ENCODE measurements at regions of chr22 and their contacts with region 1.

Region 1: GRCh38 chr22:50620593-50621355 is 7.2 kb downstream of the ARSA start:
- DNase-seq: peak; percentile 94
- ATAC-seq: peak; percentile 81
- H3K4me3 ChIP-seq: peak overlapping the region; percentile 46 to 79 (median 59)
- H3K4me3 Mint-ChIP-seq: peak overlapping the region; percentile 95
- H3K27ac ChIP-seq: peak overlapping the region; percentile 91 to 95
- H3K27ac Mint-ChIP-seq: peak overlapping the region; percentile 97
- H3K4me1 ChIP-seq: peaks cover 24 to 35% of the 10 kb centered on the region in 2 donors
- H3K4me1 Mint-ChIP-seq: peaks cover 31% of the 10 kb centered on the region
- H3K27me3 ChIP-seq: no peaks in the 10 kb centered on the region
- H3K27me3 Mint-ChIP-seq: no peaks in the 10 kb centered on the region
- CTCF ChIP-seq: peak; percentile 24

Region 2: DNA sequence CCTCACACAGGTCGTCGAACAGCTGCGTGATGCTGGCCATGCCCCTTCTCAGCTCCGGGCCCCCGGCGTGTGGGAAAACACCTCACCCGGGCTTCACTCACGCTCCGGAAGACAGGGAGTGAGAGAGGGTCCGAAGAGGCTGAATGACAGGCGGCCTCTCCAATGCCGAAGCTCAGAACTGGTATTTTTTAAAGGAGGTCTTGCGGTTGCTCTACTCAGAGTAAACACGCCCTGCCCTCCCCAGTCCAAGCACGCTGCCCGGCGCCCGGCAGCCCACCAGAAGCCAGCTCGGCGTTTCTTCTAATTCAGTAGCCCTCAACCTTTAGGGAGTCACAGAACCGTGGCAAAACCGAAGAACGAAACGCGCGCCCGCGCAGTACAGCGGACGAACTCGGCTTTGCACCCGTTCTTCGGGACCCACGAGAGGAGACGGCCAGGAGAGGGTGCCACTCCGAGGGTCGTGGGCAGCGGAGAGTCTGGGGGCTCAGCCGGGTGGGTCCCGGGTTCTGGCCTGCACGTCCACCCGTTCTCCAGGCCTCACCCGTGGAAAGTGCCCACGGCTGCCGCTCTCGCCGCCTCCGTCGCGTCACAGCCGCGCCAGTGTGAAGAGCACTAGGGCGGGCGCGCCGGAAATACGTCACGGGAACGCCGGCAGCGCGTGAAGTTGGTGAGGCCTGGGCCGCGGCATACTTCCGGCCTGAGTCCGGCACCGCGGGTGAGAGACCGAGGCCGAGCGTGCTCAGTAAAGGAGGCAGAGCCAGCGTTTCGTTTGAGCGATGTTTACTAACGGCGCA is 376.2 kb before region 1 on chr22 and contains the start of gene TUBGCP6:
- CTCF ChIA-PET with region 1: interaction called, 16 read pairs
- POLR2A ChIA-PET with region 1: interaction called, 9 read pairs
- intact Hi-C with region 1: loop called (anchors 2 kb)
- DNase-seq: peak; percentile 96
- ATAC-seq: peak; percentile 81
- H3K4me3 ChIP-seq: peak within 1 kb of the TSS; percentile 65 to 99 (median 90)
- H3K4me3 Mint-ChIP-seq: peak within 1 kb of the TSS; percentile 96
- H3K27ac ChIP-seq: peak within 1 kb of the TSS; percentile 91 to 96
- H3K27ac Mint-ChIP-seq: peak within 1 kb of the TSS; percentile 99
- H3K4me1 ChIP-seq: peaks cover 33 to 66% of the 10 kb centered on the region in 2 donors
- H3K4me1 Mint-ChIP-seq: peaks cover 40% of the 10 kb centered on the region
- H3K27me3 ChIP-seq: no peaks in the 10 kb centered on the region
- H3K27me3 Mint-ChIP-seq: no peaks in the 10 kb centered on the region
- CTCF ChIP-seq: no peak
- total RNA-seq, gene TUBGCP6: 137 and 139 TPM in 2 replicates

Region 3: DNA sequence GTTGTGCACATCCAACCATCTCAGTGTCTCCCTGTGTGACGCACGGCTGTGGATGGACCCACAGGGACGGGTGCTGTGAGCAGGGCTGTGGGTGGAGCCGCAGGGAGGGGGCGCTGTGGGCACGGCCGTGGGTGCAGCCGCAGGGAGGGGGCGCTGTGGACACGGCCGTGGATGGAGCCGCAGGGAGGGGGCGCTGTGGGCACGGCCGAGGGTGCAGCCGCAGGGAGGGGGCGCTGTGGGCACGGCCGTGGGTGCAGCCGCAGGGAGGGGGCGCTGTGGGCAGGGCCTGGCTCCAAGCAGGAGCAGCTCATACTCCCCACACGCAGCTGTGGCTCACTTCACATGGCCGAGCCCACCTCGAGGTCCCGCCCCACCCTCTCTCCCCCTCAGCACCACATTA is 344.6 kb before region 1 on chr22:
- CTCF ChIA-PET with region 1: interaction called, 16 read pairs
- POLR2A ChIA-PET with region 1: no interaction called
- intact Hi-C with region 1: no loop called
- DNase-seq: peak; percentile 86
- ATAC-seq: peak; percentile 71
- H3K4me3 ChIP-seq: no peak overlapping the region
- H3K4me3 Mint-ChIP-seq: no peak overlapping the region
- H3K27ac ChIP-seq: no peak overlapping the region
- H3K27ac Mint-ChIP-seq: peak overlapping the region; percentile 26
- H3K4me1 ChIP-seq: peaks cover 6 to 12% of the 10 kb centered on the region in 2 donors
- H3K4me1 Mint-ChIP-seq: peaks cover 4% of the 10 kb centered on the region
- H3K27me3 ChIP-seq: peaks cover 0 to 8% (median 1%) of the 10 kb centered on the region in 4 experiments
- H3K27me3 Mint-ChIP-seq: no peaks in the 10 kb centered on the region
- CTCF ChIP-seq: peak; percentile 64

Region 4: GRCh38 chr22:50469377-50470305 is 151.1 kb before region 1 on chr22:
- CTCF ChIA-PET with region 1: interaction called, 8 read pairs
- POLR2A ChIA-PET with region 1: no interaction called
- intact Hi-C with region 1: loop called (anchors 1 kb)
- DNase-seq: peak; percentile 96
- ATAC-seq: peak; percentile 79
- H3K4me3 ChIP-seq: peak overlapping the region in 4 of 5 experiments; percentile 1 to 39 (median 29)
- H3K4me3 Mint-ChIP-seq: peak overlapping the region; percentile 83
- H3K27ac ChIP-seq: peak overlapping the region; percentile 69 to 90
- H3K27ac Mint-ChIP-seq: peak overlapping the region; percentile 96
- H3K4me1 ChIP-seq: peaks cover 60 to 66% of the 10 kb centered on the region in 2 donors
- H3K4me1 Mint-ChIP-seq: peaks cover 69% of the 10 kb centered on the region
- H3K27me3 ChIP-seq: no peaks in the 10 kb centered on the region
- H3K27me3 Mint-ChIP-seq: no peaks in the 10 kb centered on the region
- CTCF ChIP-seq: peak; percentile 31

Region 5: GRCh38 chr22:50507991-50508884 is 112.5 kb before region 1 on chr22 and contains the start of gene NCAPH2:
- CTCF ChIA-PET with region 1: interaction called, 9 read pairs
- POLR2A ChIA-PET with region 1: interaction called, 9 read pairs
- intact Hi-C with region 1: loop called (anchors 1 kb)
- DNase-seq: peak; percentile 98
- ATAC-seq: peak; percentile 71
- H3K4me3 ChIP-seq: peak within 1 kb of the TSS; percentile 75 to 92 (median 91)
- H3K4me3 Mint-ChIP-seq: peak within 1 kb of the TSS; percentile 95
- H3K27ac ChIP-seq: peak within 1 kb of the TSS; percentile 88 to 92
- H3K27ac Mint-ChIP-seq: peak within 1 kb of the TSS; percentile 98
- H3K4me1 ChIP-seq: peaks cover 19 to 29% of the 10 kb centered on the region in 2 donors
- H3K4me1 Mint-ChIP-seq: peaks cover 28% of the 10 kb centered on the region
- H3K27me3 ChIP-seq: no peaks in the 10 kb centered on the region
- H3K27me3 Mint-ChIP-seq: no peaks in the 10 kb centered on the region
- CTCF ChIP-seq: no peak
- total RNA-seq, gene NCAPH2: 71.5 and 76.9 TPM in 2 replicates

Region 6: DNA sequence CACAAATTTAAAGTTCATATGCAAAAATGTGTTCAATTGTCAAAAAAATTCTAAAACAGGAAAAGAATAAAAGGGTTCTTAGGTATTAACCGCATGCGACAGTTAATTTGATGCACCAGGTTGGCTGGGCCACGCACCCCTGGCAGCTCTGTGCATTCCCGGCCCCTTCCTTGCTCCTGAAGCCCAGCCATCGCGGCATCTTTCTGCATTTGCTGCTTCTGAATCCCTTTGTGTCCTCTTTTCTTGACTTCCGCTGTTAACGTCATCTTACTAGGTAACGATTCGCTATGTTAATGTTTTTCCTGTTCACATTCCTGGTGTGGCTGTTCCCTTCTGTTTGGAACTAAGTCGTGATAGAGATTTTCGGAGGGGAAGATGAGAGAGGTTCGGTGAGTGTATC is 83.0 kb before region 1 on chr22:
- CTCF ChIA-PET with region 1: interaction called, 23 read pairs
- POLR2A ChIA-PET with region 1: interaction called, 18 read pairs
- intact Hi-C with region 1: no loop called
- DNase-seq: no peak
- ATAC-seq: no peak
- H3K4me3 ChIP-seq: no peak overlapping the region
- H3K4me3 Mint-ChIP-seq: peak overlapping the region; percentile 56
- H3K27ac ChIP-seq: peak overlapping the region; percentile 95 to 96
- H3K27ac Mint-ChIP-seq: peak overlapping the region; percentile 92
- H3K4me1 ChIP-seq: peaks cover 39 to 72% of the 10 kb centered on the region in 2 donors
- H3K4me1 Mint-ChIP-seq: peaks cover 68% of the 10 kb centered on the region
- H3K27me3 ChIP-seq: no peaks in the 10 kb centered on the region
- H3K27me3 Mint-ChIP-seq: no peaks in the 10 kb centered on the region
- CTCF ChIP-seq: no peak

Region 7: GRCh38 chr22:50582562-50583293 is 38.0 kb before region 1 on chr22 and contains the start of gene CHKB:
- CTCF ChIA-PET with region 1: interaction called, 5 read pairs
- POLR2A ChIA-PET with region 1: interaction called, 4 read pairs
- intact Hi-C with region 1: loop called (anchors 1 kb)
- DNase-seq: peak; percentile 98
- ATAC-seq: peak; percentile 94
- H3K4me3 ChIP-seq: peak within 1 kb of the TSS; percentile 58 to 91 (median 80)
- H3K4me3 Mint-ChIP-seq: peak within 1 kb of the TSS; percentile 89
- H3K27ac ChIP-seq: peak within 1 kb of the TSS; percentile 82 to 96
- H3K27ac Mint-ChIP-seq: peak within 1 kb of the TSS; percentile 93
- H3K4me1 ChIP-seq: peaks cover 14 to 18% of the 10 kb centered on the region in 2 donors
- H3K4me1 Mint-ChIP-seq: peaks cover 24% of the 10 kb centered on the region
- H3K27me3 ChIP-seq: no peaks in the 10 kb centered on the region
- H3K27me3 Mint-ChIP-seq: no peaks in the 10 kb centered on the region
- CTCF ChIP-seq: no peak
- total RNA-seq, gene CHKB: 238 and 239 TPM in 2 replicates

Region 8: DNA sequence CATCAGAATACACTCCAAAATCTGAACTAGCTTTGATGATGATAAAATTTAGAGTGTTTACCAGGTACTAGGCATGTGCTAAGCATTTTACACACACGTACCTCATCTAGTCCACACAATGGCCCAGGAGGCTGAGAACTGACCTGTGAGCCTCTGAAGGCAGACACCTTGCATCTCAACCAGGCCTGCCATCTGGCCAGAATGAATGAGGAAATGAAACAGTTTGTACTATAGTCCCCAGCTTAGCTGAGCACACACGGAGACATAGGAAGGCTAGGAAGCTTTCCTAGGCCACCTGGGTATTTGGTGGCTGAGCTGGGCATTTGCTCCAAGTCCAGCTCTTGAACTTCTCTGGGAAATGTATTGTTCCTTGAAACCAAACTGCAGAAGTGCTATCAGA is 45.0 kb after region 1 on chr22:
- CTCF ChIA-PET with region 1: no interaction called
- POLR2A ChIA-PET with region 1: no interaction called
- intact Hi-C with region 1: no loop called
- DNase-seq: no peak
- ATAC-seq: no peak
- H3K4me3 ChIP-seq: no peak overlapping the region
- H3K4me3 Mint-ChIP-seq: no peak overlapping the region
- H3K27ac ChIP-seq: no peak overlapping the region
- H3K27ac Mint-ChIP-seq: no peak overlapping the region
- H3K4me1 ChIP-seq: no peaks in the 10 kb centered on the region
- H3K4me1 Mint-ChIP-seq: no peaks in the 10 kb centered on the region
- H3K27me3 ChIP-seq: peaks cover 0 to 12% (median 0%) of the 10 kb centered on the region in 4 experiments
- H3K27me3 Mint-ChIP-seq: peaks cover 27% of the 10 kb centered on the region
- CTCF ChIP-seq: no peak

Measured in B cell (primary cell).